Mammary epithelial cell (primary cell): ENCODE measurements at regions of chr11 and their contacts with region 1.

Region 1: DNA sequence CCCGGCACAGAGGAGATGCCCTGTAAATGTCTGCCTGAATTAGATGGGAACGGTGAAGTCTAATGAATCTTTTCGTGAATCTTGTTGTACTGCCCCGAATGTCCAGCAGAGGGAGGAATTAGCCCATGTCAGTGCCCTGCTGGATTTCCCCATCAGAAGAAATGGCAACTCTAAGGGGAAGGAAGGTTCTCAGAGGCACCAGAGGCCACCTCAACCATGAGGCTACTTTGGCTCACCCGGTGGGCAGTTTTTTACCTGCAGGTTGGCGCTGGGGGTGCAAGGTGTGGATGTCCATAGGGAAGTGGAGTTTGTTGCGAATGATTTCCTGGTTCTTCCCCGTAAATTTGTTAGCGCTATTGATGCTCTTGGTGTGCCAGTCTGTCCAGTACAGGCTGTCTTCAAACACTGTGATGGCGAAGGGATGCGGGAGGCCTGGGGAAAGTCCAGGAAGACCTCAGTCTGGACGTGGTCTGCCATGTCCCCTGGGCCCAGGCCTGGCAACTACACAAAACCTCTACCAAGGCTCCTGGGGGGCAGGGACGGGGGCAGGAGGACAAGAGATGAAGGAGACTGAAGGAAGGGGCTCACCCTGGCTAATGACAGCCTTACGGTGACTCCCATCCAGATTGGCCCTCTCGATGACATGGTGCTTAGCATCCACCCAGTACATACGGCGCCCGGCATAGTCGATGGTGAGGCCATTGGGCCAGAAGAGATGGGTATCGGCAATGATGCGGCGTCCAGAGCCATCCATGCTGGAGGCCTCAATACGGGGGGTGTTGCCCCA is 28.5 kb downstream of the LRP4 start:
- DNase-seq: peak; percentile 55
- H3K4me3 ChIP-seq: no peak overlapping the region
- H3K27ac ChIP-seq: no peak overlapping the region
- H3K4me1 ChIP-seq: no peaks in the 10 kb centered on the region
- H3K27me3 ChIP-seq: no peaks in the 10 kb centered on the region
- CTCF ChIP-seq: peak; percentile 89

Region 2: DNA sequence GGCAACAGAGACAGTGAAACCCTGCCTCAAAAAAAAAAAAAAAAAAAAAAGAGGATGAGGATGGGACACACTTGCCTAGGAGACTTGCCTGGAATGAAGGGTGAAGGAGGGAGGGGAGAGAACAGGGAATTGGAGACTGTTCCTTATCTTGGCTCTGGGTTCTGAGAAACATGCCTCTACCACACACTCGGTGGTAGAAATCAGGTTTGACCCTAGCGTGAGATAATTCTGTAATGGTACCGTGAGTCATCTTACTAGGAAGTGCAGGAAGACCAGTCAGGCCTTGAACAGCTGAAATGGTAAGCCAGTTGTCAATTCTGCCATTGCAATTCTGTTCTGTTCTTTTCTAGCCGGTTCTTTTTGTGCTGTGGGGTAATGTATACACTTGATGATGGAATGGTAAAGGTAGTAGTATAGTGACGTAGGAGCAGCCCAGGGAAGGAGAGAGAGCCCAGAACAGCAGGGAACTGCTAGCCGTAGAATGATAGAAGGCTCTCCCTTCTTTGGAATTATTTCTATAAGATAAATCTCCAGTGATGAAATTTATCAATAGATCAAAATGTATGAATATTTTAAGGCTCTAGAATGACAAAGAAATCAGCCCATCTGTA is 292.2 kb before region 1 on chr11:
- CTCF ChIA-PET with region 1: no interaction called
- dilution Hi-C with region 1: no loop called
- in situ Hi-C with region 1: no loop called
- intact Hi-C with region 1: no loop called
- DNase-seq: no peak
- H3K4me3 ChIP-seq: no peak overlapping the region
- H3K27ac ChIP-seq: no peak overlapping the region
- H3K4me1 ChIP-seq: peaks cover 5% of the 10 kb centered on the region
- H3K27me3 ChIP-seq: no peaks in the 10 kb centered on the region
- CTCF ChIP-seq: no peak

Region 3: DNA sequence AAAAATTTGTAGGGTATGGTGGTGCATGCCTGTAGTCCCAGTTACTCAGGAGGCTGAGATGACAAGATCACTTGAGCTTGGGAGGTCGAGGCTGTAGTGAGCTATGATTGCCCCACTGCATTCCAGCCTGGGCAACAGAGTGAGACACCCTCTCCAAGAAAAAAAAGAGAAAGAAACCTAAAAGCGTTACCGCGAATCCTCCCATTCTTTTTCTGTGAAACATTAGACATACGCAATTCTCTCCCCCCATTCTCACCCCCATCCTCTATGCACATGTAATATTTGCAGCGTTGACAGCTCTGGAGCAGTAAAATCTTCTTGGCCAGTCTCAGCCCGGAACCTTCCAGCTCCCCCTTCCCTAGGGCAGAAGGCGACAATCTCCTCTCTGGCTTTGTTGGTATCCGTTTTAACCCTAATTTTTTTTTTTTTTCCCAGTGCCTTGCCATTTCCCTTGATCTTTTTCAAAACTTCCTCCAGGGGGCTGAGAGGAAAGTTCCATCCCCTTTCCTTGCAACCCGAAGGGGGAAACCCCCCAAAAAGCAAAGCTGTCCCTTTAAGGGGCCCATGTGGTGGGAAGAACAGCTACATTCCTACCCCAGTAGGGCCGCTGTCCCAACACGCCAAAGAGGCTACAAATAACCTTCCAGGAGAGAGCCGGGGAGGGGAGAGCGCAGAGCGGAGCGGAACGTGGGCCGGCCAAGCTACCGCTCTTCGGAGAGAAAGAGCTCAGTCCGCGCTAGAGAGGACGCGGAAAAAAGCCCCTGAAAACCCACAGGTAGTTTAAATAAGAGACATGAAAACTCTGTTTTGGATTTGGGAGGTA is 26.6 kb after region 1 on chr11:
- CTCF ChIA-PET with region 1: no interaction called
- dilution Hi-C with region 1: no loop called
- in situ Hi-C with region 1: no loop called
- intact Hi-C with region 1: loop called (anchors 2 kb)
- DNase-seq: peak; percentile 81
- H3K4me3 ChIP-seq: peak overlapping the region; percentile 57 to 66 (median 62)
- H3K27ac ChIP-seq: peak overlapping the region; percentile 44
- H3K4me1 ChIP-seq: peaks cover 43% of the 10 kb centered on the region
- H3K27me3 ChIP-seq: no peaks in the 10 kb centered on the region
- CTCF ChIP-seq: peak in 1 of 2 donors; percentile 15

Region 4: GRCh38 chr11:47161134-47161854 is 271.4 kb after region 1 on chr11:
- CTCF ChIA-PET with region 1: no interaction called
- dilution Hi-C with region 1: no loop called
- in situ Hi-C with region 1: loop called in 1 of 2 experiments (anchors 5 kb)
- intact Hi-C with region 1: loop called (anchors 1 kb)
- DNase-seq: peak; percentile 28
- H3K4me3 ChIP-seq: no peak overlapping the region
- H3K27ac ChIP-seq: no peak overlapping the region
- H3K4me1 ChIP-seq: no peaks in the 10 kb centered on the region
- H3K27me3 ChIP-seq: no peaks in the 10 kb centered on the region
- CTCF ChIP-seq: peak; percentile 61 to 77

Region 5: DNA sequence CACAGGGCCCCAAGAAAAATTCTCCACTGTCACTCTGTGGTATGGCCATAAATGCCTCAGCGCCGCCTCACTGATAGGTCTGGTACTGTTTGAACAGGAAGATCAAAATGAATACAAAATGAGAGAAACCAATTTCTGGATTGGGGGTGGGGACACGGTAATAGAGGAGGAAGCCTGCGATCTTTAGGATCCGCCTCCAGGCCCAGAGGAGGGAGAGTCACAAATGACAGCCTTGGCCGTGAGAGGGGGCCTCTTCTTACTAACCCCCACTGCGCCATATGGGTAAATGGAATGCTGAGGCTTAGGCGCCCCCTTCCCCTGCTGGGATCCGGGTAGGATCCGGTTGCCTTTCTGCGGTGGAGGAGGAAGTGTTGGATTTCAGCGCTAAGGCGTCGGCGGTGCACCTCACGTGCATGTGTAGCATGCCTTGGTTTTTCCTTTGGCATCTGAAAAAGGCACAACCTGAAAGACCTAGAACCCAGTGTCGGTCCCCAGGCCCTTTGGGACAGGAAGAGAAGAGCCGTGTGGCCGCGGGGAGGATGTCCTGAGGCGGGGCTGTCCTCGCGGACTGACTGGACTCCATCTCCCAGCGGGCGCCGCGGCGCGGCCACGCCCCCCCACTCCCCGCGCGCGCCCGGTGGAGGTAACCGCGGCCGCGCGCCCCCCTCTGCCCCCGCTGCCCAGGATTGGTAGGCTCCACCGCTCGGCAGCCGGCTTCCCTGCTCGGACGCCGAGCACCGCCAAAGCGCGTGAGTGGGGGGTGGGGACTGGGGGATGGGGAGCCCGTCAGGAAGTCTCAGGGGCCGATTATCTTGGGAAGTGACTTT is 379.3 kb after region 1 on chr11:
- CTCF ChIA-PET with region 1: no interaction called
- dilution Hi-C with region 1: no loop called
- in situ Hi-C with region 1: no loop called
- intact Hi-C with region 1: loop called (anchors 10 kb)
- DNase-seq: peak; percentile 80
- H3K4me3 ChIP-seq: peak overlapping the region; percentile 58 to 87 (median 87)
- H3K27ac ChIP-seq: peak overlapping the region; percentile 61
- H3K4me1 ChIP-seq: peaks cover 21% of the 10 kb centered on the region
- H3K27me3 ChIP-seq: no peaks in the 10 kb centered on the region
- CTCF ChIP-seq: peak in 1 of 2 donors; percentile 12

Region 6: DNA sequence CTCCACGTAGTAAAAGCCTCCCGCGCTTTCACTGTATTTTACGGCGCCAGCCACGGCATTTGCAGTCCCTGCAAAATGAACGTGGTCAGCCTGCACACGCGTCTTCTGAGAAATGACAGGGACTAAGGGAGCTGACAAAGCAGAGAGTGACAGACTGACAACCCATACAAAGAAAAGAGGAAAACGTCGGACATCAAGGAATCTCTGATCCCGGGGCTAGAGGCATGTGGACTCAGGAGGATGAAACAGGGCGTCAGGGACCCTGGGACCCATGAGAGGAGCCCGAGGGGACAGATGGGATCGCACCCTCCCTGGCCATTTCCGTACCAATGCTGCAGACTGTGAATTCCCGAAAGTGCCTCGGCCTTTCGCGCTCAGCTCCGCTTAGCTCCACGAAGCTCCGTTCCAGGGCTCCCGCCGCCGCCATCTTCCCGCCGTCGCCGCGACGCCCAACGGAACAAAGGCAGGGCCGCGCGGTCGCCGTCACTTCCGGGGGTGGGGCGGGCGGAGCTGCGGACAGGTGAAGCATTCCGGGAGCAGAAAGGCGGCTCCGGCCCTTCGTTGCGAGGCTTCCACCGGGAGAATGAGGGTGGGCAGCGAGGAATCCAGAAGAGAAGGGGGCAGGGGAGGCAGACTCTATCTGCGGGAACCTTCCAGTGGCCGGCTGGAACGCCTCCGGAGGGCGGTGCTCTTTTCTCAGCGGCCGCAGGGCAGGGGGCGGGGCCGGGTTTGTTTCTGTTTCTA is 958.2 kb after region 1 on chr11 and contains the start of gene NUP160:
- CTCF ChIA-PET with region 1: no interaction called
- dilution Hi-C with region 1: no loop called
- in situ Hi-C with region 1: no loop called
- intact Hi-C with region 1: loop called (anchors 5 kb)
- DNase-seq: peak; percentile 69
- H3K4me3 ChIP-seq: peak within 1 kb of the TSS; percentile 81 to 97 (median 93)
- H3K27ac ChIP-seq: peak within 1 kb of the TSS; percentile 86
- H3K4me1 ChIP-seq: peaks cover 14% of the 10 kb centered on the region
- H3K27me3 ChIP-seq: no peaks in the 10 kb centered on the region
- CTCF ChIP-seq: no peak
- total RNA-seq, gene NUP160: 20.8 to 29.3 TPM